Activated naive CD4-positive, alpha-beta T cell treated with anti-CD3 and anti-CD28 coated beads for 36 hours (primary cell): ENCODE measurements at regions of chrX and their contacts with region 1.

Region 1: DNA sequence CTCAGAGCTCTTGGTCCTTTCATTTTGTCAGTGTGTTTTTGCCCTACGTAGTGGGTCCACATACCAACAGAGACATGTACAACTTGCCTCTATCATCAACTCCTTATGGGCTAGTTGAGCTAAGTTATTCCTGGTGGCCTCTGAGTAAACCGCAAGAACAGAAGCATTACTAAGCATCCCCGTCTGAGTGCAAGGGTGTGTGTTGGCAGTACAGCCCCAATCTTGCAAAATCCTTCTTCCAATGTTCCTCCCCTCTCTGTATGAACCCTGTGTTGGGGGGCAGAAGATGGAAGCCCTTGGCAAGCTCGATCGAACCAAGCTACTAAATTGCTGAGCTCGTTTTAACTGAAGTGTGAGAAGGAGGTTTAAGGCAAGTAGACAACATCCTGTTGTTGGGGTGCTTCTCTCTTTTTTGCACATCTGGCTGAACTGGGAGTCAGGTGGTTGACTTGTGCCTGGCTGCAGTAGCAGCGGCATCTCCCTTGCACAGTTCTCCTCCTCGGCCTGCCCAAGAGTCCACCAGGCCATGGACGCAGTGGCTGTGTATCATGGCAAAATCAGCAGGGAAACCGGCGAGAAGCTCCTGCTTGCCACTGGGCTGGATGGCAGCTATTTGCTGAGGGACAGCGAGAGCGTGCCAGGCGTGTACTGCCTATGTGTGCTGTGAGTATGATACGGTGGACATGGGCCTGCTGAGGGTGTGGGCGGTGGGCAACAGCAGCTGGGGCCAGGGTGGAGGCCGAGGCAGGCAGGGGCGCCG is at the start of gene SH2D1A:
- DNase-seq: peak; percentile 29
- H3K4me3 Mint-ChIP-seq: peak within 1 kb of the TSS; percentile 86
- H3K27ac Mint-ChIP-seq: peak within 1 kb of the TSS; percentile 95
- H3K4me1 Mint-ChIP-seq: peaks cover 45% of the 10 kb centered on the region
- H3K27me3 Mint-ChIP-seq: no peaks in the 10 kb centered on the region
- total RNA-seq, gene SH2D1A: 17.0 to 17.2 TPM

Region 2: DNA sequence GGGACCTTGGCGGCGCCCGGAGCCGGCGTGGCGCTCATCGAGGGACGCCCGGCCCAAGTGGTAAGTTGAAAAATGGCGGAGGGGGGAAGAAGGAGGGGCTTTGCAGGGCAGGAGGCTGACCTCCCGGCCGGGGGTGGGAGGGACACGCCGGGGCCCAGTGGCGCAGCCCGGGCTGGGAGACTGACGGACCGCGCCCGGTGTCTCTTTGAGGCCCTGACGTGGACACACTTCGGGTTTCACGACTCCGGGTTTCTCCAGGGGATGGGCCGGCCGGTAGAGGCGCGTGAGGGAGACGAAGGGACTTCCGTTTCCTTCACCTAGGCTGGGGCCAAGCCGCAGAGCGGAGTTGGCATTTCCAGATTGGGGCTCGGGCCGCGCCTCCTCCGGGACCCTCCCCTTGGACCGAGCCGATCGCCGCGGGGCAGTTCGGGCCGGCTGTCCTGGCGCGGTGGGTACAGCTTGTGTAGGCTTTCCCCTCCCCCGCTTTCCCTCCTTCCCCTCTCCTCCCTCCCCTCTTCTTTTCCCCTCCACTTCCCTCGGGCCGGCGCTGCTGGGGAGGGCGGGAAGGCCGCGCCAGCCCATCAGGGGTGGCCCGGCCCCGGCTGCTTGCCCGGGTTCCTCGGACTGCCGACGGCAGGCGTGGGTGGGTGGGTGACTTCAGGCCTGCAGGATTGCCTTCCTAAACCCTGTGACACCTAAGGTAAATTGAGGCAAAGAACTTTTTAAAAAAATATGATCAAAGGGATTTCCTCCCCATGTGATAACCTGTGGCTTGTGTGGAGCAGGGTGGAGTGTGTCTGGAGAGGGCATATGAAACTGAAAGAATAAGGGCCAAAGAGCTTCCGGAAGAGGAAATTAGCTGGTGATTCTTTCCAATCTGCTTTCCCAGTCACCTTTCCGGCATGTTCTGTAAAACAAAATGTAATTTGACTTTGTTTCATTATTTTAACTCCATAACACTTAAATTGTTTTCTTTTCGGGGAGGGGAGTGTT is 486.2 kb before region 1 on chrX and contains the start of gene XIAP:
- CTCF ChIA-PET with region 1: interaction called, 3 read pairs
- intact Hi-C with region 1: loop called (anchors 5 kb)
- DNase-seq: peak; percentile 70
- H3K4me3 Mint-ChIP-seq: peak within 1 kb of the TSS; percentile 79
- H3K27ac Mint-ChIP-seq: peak within 1 kb of the TSS; percentile 92
- H3K4me1 Mint-ChIP-seq: peaks cover 11% of the 10 kb centered on the region
- H3K27me3 Mint-ChIP-seq: peaks cover 2% of the 10 kb centered on the region
- total RNA-seq, gene XIAP: 24.0 to 24.5 TPM

Region 3: DNA sequence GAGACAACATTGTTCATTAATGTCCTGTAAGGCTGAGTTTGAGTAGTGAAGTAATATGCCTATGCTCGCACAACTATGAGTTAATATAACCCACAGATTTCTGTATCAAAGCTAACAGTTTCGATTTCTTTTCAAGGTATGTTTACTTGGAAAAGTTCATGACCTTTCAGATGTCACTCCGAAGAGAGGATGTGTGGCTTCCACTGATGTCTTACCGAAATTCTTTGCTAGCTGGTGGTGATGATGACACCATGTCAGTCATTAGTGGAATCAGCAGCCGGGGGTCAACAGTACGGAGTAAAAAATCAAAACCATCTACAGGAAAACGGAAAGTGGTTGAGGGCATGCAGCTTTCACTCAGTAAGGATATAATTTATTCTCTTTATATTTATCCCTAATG is 259.9 kb before region 1 on chrX:
- CTCF ChIA-PET with region 1: no interaction called
- intact Hi-C with region 1: loop called (anchors 1 kb)
- DNase-seq: peak; percentile 58
- H3K4me3 Mint-ChIP-seq: no peak overlapping the region
- H3K27ac Mint-ChIP-seq: peak overlapping the region; percentile 83
- H3K4me1 Mint-ChIP-seq: peaks cover 28% of the 10 kb centered on the region
- H3K27me3 Mint-ChIP-seq: no peaks in the 10 kb centered on the region

Region 4: DNA sequence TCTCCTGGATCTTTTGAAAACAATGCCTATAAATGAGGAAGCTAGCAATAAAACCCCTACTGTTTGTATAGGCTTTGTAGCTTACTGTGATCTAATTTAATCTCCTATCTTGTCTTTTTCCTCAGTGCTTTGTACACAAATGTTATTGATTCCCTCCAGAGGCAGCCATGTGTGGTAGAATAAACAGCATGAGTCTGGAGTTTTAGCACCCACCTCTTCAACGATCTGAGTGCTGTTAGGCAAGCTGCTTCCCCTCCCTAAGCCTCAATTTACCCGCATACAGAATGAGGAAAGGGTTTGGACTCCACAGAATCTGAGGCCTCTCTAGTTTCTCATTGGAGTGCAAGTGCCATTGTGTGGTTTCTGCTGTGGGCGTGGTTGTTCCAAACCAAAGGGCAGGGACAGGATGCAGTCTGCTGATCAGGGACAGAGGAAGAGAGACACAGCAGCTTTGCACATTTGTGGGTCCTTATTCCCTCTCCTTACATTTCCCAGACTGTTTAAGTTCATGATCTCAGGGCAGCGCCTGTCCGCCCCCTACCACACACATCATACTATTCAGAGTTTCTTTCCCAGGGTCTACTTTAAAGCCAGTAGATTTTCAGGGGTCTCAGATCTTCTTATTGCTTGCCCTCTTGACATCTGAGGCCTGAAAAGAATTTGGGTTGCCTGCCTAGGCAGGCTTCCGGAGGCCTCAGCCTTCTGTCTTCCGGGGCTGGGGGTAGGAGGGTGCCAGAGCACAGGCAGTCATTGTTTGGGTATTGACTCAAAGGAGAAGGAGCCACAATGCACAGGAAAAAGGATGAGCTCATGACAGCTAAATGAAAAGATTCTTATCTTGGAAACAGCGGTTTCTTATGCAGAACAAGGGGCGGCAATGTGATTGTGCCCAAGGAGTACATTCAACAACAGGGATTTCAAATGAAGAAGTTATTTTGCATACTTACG is 128.7 kb before region 1 on chrX:
- CTCF ChIA-PET with region 1: interaction called, 3 read pairs
- intact Hi-C with region 1: loop called (anchors 1 kb)
- DNase-seq: peak; percentile 68
- H3K4me3 Mint-ChIP-seq: peak overlapping the region; percentile 60
- H3K27ac Mint-ChIP-seq: peak overlapping the region; percentile 93
- H3K4me1 Mint-ChIP-seq: peaks cover 76% of the 10 kb centered on the region
- H3K27me3 Mint-ChIP-seq: no peaks in the 10 kb centered on the region

Region 5: GRCh38 chrX:124239911-124240310 is 106.4 kb before region 1 on chrX:
- CTCF ChIA-PET with region 1: interaction called, 7 read pairs
- intact Hi-C with region 1: loop called (anchors 1 kb)
- DNase-seq: peak; percentile 72
- H3K4me3 Mint-ChIP-seq: peak overlapping the region; percentile 15
- H3K27ac Mint-ChIP-seq: peak overlapping the region; percentile 42
- H3K4me1 Mint-ChIP-seq: peaks cover 40% of the 10 kb centered on the region
- H3K27me3 Mint-ChIP-seq: no peaks in the 10 kb centered on the region

Region 6: DNA sequence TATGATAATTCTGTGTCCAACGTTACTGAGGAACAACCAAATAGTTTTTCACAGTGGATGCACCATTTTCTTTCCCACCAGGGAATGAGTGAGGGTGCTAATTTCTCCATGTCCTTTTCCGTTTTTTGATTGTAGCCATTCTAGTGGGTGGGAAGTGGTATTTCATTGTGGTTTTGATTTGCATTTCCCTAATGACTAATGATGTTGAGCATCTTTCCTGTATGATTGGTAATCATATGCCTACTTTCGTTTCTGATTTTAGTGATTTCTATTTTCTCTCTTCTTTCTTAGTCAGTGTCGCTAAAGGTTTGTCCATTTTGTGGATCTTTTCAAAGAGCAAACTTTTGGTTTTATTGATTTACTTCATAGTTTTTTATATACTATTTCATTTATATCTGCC is 45.9 kb before region 1 on chrX:
- CTCF ChIA-PET with region 1: interaction called, 3 read pairs
- intact Hi-C with region 1: loop called (anchors 1 kb)
- DNase-seq: no peak
- H3K4me3 Mint-ChIP-seq: no peak overlapping the region
- H3K27ac Mint-ChIP-seq: no peak overlapping the region
- H3K4me1 Mint-ChIP-seq: peaks cover 21% of the 10 kb centered on the region
- H3K27me3 Mint-ChIP-seq: no peaks in the 10 kb centered on the region

Region 7: DNA sequence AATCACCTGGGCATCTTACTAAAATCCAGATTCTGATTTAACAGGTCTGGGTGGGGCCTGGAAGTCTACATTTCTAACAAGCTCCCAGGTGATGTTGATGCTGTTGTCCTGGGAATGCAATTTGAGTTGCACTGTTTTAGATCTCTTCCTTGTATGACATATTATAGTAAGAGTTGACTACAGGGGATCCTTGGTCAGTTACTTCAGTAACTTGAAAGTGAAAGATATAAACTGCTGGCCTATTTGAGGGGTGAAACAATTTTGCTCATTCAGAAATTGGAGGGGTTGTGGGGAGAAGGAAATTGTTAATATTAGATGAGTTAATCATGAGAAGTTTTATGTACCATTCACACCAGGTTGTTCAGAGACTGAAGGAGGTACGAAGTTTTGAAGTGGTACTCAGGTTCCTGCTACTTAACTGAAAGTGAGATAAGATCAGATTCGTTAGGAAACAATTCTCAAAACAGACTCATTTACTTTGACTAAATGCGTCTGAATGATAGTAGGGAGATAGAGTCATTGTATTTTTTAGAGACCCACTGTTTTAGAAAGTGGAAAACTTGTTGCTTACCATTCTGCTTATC is 12.6 kb after region 1 on chrX:
- CTCF ChIA-PET with region 1: interaction called, 3 read pairs
- intact Hi-C with region 1: loop called (anchors 1 kb)
- DNase-seq: no peak
- H3K4me3 Mint-ChIP-seq: peak overlapping the region; percentile 77
- H3K27ac Mint-ChIP-seq: peak overlapping the region; percentile 87
- H3K4me1 Mint-ChIP-seq: peaks cover 52% of the 10 kb centered on the region
- H3K27me3 Mint-ChIP-seq: no peaks in the 10 kb centered on the region